Heart right ventricle (tissue), 16 donors: ENCODE measurements at regions of chr18 and their contacts with region 1.

Region 1: GRCh38 chr18:32552421-32553030 is 81.8 kb upstream of the GAREM1 start:
- DNase-seq: peak; percentile 12 to 53
- ATAC-seq: peak in 6 of 8 donors; percentile 59 to 84 (median 66)
- H3K4me3 ChIP-seq: no peak overlapping the region
- H3K27ac ChIP-seq: no peak overlapping the region
- H3K4me1 ChIP-seq: no peaks in the 10 kb centered on the region
- H3K27me3 ChIP-seq: no peaks in the 10 kb centered on the region
- CTCF ChIP-seq: peak; percentile 55 to 83 (median 76)

Region 2: GRCh38 chr18:32158108-32158624 is 394.4 kb before region 1 on chr18:
- intact Hi-C with region 1: loop called (anchors 1 to 5 kb)
- DNase-seq: peak; percentile 63 to 77
- ATAC-seq: peak; percentile 90 to 98 (median 95)
- H3K4me3 ChIP-seq: peak overlapping the region in 7 of 10 donors; percentile 13 to 35 (median 25)
- H3K27ac ChIP-seq: no peak overlapping the region
- H3K4me1 ChIP-seq: peaks cover 0 to 12% (median 0%) of the 10 kb centered on the region in 9 donors
- H3K27me3 ChIP-seq: peaks cover 0 to 9% (median 0%) of the 10 kb centered on the region in 7 donors
- CTCF ChIP-seq: peak; percentile 68 to 90 (median 82)

Region 3: GRCh38 chr18:32271672-32272208 is 280.8 kb before region 1 on chr18:
- intact Hi-C with region 1: loop called in 9 of 10 experiments (anchors 2 to 10 kb)
- DNase-seq: peak in 1 of 2 donors; percentile 25
- ATAC-seq: peak; percentile 50 to 76 (median 72)
- H3K4me3 ChIP-seq: no peak overlapping the region
- H3K27ac ChIP-seq: no peak overlapping the region
- H3K4me1 ChIP-seq: peaks cover 0 to 9% (median 5%) of the 10 kb centered on the region in 9 donors
- H3K27me3 ChIP-seq: no peaks in the 10 kb centered on the region
- CTCF ChIP-seq: peak; percentile 32 to 77 (median 71)

Region 4: DNA sequence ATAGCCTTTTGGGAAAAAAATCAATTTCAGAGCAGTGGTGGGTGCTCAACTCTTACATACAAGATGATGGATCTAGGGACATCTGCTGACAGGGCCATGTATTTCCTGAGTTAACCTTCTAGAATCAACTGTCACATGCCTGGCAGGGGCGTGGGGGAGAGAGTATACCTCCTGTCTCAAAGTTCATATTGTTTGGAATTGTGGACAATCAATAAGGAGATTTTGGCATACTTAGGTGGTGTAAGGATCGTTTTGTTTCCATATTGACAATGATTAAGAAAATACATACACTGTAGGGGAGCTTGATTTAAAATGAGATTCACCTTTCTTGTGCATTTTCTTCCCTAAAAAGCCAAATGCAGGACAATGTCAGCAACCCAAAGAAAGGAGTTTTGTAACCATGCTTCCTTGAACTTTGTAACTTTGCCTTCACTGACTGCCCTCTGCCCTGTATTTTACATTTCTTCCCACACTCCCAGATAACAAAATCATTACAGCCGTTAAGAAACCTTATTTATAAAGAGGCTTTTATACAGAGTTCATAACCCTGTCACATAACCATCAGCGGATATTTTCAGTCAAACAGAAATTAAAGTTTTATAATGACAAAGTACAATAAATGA is 274.2 kb before region 1 on chr18:
- intact Hi-C with region 1: loop called (anchors 2 to 10 kb)
- DNase-seq: no peak
- ATAC-seq: no peak
- H3K4me3 ChIP-seq: no peak overlapping the region
- H3K27ac ChIP-seq: no peak overlapping the region
- H3K4me1 ChIP-seq: peaks cover 0 to 38% (median 12%) of the 10 kb centered on the region in 9 donors
- H3K27me3 ChIP-seq: no peaks in the 10 kb centered on the region
- CTCF ChIP-seq: no peak